Ascending aorta (tissue), 2 donors: ENCODE measurements at regions of chr5 and their contacts with region 1.

Region 1: DNA sequence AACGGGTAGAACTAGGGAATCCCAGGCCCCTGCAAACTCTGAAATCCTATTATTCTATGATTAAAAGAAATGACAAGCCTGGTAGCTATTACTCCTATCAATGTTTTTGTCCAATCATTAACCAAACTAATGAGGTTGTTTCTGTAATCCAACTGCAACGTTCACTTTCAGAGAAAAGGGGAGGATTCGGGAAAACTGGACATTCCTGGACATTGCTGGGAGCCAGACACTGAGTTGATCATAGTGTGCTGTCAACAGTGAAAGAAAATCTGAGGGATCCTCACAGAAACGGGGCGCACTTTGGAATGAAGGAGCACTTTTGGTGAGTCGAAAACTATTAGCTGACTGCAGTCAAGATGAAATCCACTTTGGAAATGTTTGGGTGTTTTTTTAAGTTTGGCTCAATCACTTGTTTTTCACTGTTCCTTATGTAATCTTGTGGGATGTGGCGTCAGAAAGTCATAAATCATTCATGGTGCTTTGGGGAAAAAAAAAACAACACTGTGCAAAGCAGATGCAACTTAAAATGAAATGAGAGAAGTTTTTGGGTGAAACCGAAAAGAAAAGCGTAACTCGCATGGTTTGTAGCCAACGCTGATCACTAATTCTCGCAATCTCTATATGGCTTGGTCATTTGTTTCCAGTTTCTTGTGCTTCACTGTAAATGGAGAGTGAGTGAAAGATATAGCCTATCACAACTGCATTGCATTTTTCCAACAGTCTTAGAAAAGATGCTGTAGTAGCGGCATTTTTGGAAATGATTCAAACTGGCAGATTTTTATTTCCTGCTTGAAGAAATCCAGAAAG is 51.2 kb upstream of the ADRA1B start:
- DNase-seq: no peak
- H3K4me3 ChIP-seq: peak overlapping the region in 1 of 2 donors; percentile 54
- H3K27ac ChIP-seq: no peak overlapping the region
- H3K4me1 ChIP-seq: peaks cover 0 to 11% of the 10 kb centered on the region in 2 donors
- H3K27me3 ChIP-seq: no peaks in the 10 kb centered on the region
- CTCF ChIP-seq: no peak

Region 2: DNA sequence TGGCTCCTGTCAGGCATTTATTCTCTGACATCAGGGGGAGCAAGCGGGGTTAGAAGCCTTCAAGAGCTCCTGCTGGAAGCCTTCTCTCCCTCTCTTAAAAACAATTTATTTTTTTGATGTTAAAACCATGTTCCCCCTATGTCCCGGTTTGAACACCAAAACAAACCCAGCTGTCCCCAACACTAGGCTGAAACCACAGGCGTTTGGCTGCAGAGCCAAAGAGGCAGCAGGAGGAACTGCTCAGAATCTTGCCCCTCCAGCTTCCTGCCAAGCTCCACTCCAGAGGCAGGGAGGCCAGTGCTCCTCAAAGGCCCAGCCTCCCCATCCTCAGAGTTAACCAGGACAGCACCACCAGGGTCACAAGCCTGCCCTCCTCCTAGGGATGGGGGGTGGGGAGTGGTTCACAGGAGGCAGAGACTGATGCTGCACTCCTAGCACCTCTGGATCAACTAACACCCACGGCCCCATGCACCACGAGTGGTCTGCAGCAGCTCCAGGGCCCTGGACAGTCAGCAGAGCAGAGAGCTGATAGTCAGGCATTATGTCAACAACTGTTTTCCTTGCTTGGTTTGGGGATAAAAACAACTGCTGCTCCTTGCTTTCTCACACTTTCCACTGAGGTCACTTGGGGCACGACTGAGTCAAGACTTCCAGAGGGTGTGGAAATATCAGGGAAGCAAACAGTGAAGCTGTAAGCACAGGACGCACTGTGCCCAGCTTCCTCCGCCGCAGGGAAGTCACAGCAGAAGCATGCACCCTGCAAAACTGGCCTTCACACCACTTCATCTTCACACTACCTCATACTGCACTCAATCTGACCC is 45.3 kb before region 1 on chr5:
- intact Hi-C with region 1: loop called (anchors 5 kb)
- DNase-seq: peak; percentile 19 to 72
- H3K4me3 ChIP-seq: no peak overlapping the region
- H3K27ac ChIP-seq: peak overlapping the region in 1 of 2 donors; percentile 10
- H3K4me1 ChIP-seq: peaks cover 2 to 16% of the 10 kb centered on the region in 2 donors
- H3K27me3 ChIP-seq: no peaks in the 10 kb centered on the region
- CTCF ChIP-seq: no peak

Region 3: DNA sequence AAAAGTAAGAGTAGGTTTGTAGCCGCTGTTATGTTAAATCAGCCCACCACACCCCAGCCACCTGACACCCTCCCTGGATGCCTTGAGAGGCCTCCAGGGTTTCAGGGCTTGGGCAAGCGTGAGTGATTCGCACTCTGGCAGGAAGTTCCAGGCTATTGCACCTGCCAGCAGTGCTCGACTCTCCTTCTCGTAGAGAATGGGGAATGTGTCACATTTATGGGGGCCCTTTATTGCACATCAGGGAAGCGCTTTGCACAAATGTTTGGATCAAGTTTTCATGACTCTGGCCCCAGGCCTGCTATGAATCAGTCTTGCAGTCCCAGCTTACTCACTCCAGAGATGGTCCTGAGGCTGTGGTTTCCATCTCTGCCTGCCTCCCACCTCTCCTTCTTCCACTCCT is 14.9 kb before region 1 on chr5:
- intact Hi-C with region 1: no loop called
- DNase-seq: no peak
- H3K4me3 ChIP-seq: no peak overlapping the region
- H3K27ac ChIP-seq: no peak overlapping the region
- H3K4me1 ChIP-seq: no peaks in the 10 kb centered on the region
- H3K27me3 ChIP-seq: no peaks in the 10 kb centered on the region
- CTCF ChIP-seq: no peak

Region 4: DNA sequence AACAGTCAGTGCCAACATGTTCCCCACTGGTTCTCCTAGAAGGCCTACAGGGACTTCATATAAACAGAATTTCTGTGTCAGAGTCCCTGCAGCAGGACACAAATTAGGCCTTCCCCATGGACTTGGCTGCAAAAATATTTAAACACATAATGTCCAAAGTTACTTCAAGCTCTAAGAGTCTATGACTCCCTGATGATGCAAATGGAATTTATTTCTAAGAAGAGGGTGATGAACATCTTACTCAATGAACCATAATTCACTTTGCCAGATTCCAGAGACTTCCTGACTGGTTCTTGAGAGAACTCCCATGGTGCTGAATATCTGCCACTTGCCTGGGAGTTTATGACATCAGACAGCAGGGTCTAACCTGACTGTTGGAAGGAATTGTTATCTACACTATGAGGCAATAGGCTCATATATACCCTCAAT is 18.4 kb after region 1 on chr5:
- intact Hi-C with region 1: loop called (anchors 2 kb)
- DNase-seq: peak in 1 of 2 donors; percentile 81
- H3K4me3 ChIP-seq: no peak overlapping the region
- H3K27ac ChIP-seq: peak overlapping the region; percentile 89 to 92
- H3K4me1 ChIP-seq: peaks cover 11 to 32% of the 10 kb centered on the region in 2 donors
- H3K27me3 ChIP-seq: no peaks in the 10 kb centered on the region
- CTCF ChIP-seq: no peak

Region 5: DNA sequence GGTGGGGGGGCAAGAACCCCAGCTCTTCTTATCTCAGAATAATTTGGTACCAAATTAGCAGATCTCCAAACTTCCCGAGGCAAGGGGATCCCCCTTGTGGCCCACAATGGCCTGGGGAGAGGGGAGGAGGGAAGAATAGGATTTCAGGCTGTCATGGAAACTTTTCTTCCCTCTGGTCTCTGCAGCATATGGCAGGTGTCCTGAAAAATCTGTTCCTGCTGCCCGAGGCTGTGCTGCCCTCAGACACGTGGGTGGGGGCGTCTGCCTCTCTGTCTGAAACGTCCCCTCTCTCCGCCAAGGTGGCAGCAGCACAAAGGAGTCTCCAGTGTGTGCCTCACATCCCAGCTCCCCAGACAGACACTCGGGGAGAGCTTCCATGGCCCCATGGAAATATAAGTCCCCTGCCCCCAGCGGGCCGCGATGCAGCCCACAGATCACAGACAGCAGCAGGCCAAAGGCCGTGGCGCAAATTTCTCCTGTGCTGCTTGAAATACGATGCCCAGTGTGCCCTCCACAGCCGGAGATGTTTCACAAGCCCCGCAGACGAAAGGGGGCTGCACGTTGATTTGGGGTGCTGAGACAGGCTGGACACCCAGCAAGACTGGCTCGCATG is 413.4 kb after region 1 on chr5:
- intact Hi-C with region 1: no loop called
- DNase-seq: no peak
- H3K4me3 ChIP-seq: no peak overlapping the region
- H3K27ac ChIP-seq: no peak overlapping the region
- H3K4me1 ChIP-seq: no peaks in the 10 kb centered on the region
- H3K27me3 ChIP-seq: no peaks in the 10 kb centered on the region
- CTCF ChIP-seq: no peak